ENCODE measurements at regions of chr11 and their contacts with region 1.

Region 1: GRCh38 chr11:83115551-83115950 is 41.4 kb upstream of the PCF11 start:
- DNase-seq: no peak
- ATAC-seq: no peak
- H3K4me3 ChIP-seq: no peak overlapping the region
- H3K4me3 Mint-ChIP-seq: peak overlapping the region; percentile 75
- H3K27ac ChIP-seq: no peak overlapping the region
- H3K27ac Mint-ChIP-seq: peak overlapping the region; percentile 72
- H3K4me1 ChIP-seq: peaks cover 34% of the 10 kb centered on the region
- H3K4me1 Mint-ChIP-seq: peaks cover 52% of the 10 kb centered on the region
- H3K27me3 ChIP-seq: no peaks in the 10 kb centered on the region
- H3K27me3 Mint-ChIP-seq: no peaks in the 10 kb centered on the region
- CTCF ChIP-seq: no peak

Region 2: GRCh38 chr11:82959987-82960778 is 155.4 kb before region 1 on chr11:
- CTCF ChIA-PET with region 1: no interaction called
- POLR2A ChIA-PET with region 1: no interaction called
- intact Hi-C with region 1: no loop called
- DNase-seq: peak in 10 of 14 experiments; percentile 12 to 92 (median 46)
- ATAC-seq: peak; percentile 85
- H3K4me3 ChIP-seq: peak overlapping the region; percentile 37
- H3K4me3 Mint-ChIP-seq: peak overlapping the region; percentile 69
- H3K27ac ChIP-seq: peak overlapping the region; percentile 76 to 81
- H3K27ac Mint-ChIP-seq: peak overlapping the region; percentile 97
- H3K4me1 ChIP-seq: peaks cover 45% of the 10 kb centered on the region
- H3K4me1 Mint-ChIP-seq: peaks cover 88% of the 10 kb centered on the region
- H3K27me3 ChIP-seq: no peaks in the 10 kb centered on the region
- H3K27me3 Mint-ChIP-seq: no peaks in the 10 kb centered on the region
- CTCF ChIP-seq: no peak

Region 3: GRCh38 chr11:83078269-83078668 is 37.3 kb before region 1 on chr11:
- CTCF ChIA-PET with region 1: no interaction called
- POLR2A ChIA-PET with region 1: no interaction called
- intact Hi-C with region 1: loop called (anchors 5 kb)
- DNase-seq: no peak
- ATAC-seq: no peak
- H3K4me3 ChIP-seq: no peak overlapping the region
- H3K4me3 Mint-ChIP-seq: no peak overlapping the region
- H3K27ac ChIP-seq: no peak overlapping the region
- H3K27ac Mint-ChIP-seq: peak overlapping the region; percentile 78
- H3K4me1 ChIP-seq: peaks cover 13% of the 10 kb centered on the region
- H3K4me1 Mint-ChIP-seq: peaks cover 31% of the 10 kb centered on the region
- H3K27me3 ChIP-seq: no peaks in the 10 kb centered on the region
- H3K27me3 Mint-ChIP-seq: no peaks in the 10 kb centered on the region
- CTCF ChIP-seq: no peak

Region 4: DNA sequence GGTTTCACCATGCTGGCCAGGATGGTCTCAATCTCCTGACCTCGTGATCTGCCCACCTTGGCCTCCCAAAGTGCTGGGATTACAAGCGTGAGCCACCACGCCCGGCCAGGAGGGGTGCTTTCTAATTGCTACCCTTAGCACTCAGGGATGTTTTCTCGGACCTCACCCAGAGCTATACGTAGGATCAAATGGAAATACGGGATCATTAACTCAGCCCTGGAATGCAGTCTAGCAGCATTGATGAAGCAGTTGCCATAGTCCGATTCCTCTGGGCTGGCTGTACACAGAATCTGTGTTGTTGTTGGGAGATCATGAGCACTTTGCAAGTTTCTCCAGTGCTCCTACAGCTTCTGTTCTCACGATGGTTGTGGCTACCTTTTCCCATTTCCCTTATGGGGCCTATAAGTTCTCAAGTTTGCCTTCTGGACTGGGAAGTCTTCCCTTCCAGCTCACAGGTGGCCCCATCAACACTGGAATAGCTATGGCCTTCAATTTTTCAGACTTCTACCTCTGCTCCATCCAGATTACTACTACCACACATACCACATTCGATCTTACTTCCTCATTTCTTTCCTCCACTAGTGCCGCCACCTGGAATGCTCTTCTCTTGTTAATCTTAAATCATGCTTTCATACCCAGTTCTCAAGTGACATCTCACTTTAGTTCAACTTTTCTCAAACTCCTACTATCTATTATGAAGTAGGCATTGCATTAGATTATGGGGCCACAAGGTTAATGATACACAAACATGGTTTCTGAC is 25.3 kb after region 1 on chr11:
- CTCF ChIA-PET with region 1: no interaction called
- POLR2A ChIA-PET with region 1: no interaction called
- intact Hi-C with region 1: no loop called
- DNase-seq: no peak
- ATAC-seq: no peak
- H3K4me3 ChIP-seq: no peak overlapping the region
- H3K4me3 Mint-ChIP-seq: no peak overlapping the region
- H3K27ac ChIP-seq: no peak overlapping the region
- H3K27ac Mint-ChIP-seq: no peak overlapping the region
- H3K4me1 ChIP-seq: no peaks in the 10 kb centered on the region
- H3K4me1 Mint-ChIP-seq: no peaks in the 10 kb centered on the region
- H3K27me3 ChIP-seq: no peaks in the 10 kb centered on the region
- H3K27me3 Mint-ChIP-seq: no peaks in the 10 kb centered on the region
- CTCF ChIP-seq: no peak

Region 5: GRCh38 chr11:83681031-83681781 is 565.7 kb after region 1 on chr11:
- CTCF ChIA-PET with region 1: no interaction called
- POLR2A ChIA-PET with region 1: no interaction called
- intact Hi-C with region 1: no loop called
- DNase-seq: no peak
- ATAC-seq: no peak
- H3K4me3 ChIP-seq: no peak overlapping the region
- H3K4me3 Mint-ChIP-seq: no peak overlapping the region
- H3K27ac ChIP-seq: no peak overlapping the region
- H3K27ac Mint-ChIP-seq: no peak overlapping the region
- H3K4me1 ChIP-seq: no peaks in the 10 kb centered on the region
- H3K4me1 Mint-ChIP-seq: no peaks in the 10 kb centered on the region
- H3K27me3 ChIP-seq: peaks cover 0 to 2% of the 10 kb centered on the region in 2 experiments
- H3K27me3 Mint-ChIP-seq: peaks cover 9% of the 10 kb centered on the region
- CTCF ChIP-seq: no peak

Region 6: DNA sequence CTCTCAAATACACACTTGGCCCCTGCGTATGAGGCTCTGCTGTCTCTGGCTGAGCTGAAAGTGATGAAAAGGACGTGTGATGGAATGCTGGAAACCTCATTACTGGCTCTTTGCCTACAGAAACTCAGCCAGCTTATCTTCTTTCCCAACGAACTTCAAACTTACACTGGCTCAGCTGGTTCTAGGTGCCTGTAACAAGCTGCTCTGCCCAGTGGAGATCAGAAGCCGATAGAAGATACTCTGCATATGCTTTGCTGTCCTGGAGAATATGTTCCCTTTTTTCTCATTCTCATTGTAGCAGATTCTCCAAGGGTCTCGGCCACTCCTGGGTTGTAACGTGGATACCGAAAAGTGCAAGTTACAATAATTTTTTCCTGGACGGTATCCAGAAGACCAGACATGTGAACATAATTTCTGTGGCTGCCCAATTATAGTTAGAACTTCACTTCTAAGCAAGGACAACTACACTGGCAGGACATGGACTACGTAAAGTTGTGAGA is 576.0 kb after region 1 on chr11:
- CTCF ChIA-PET with region 1: no interaction called
- POLR2A ChIA-PET with region 1: no interaction called
- intact Hi-C with region 1: no loop called
- DNase-seq: no peak
- ATAC-seq: no peak
- H3K4me3 ChIP-seq: no peak overlapping the region
- H3K4me3 Mint-ChIP-seq: no peak overlapping the region
- H3K27ac ChIP-seq: no peak overlapping the region
- H3K27ac Mint-ChIP-seq: no peak overlapping the region
- H3K4me1 ChIP-seq: no peaks in the 10 kb centered on the region
- H3K4me1 Mint-ChIP-seq: no peaks in the 10 kb centered on the region
- H3K27me3 ChIP-seq: no peaks in the 10 kb centered on the region
- H3K27me3 Mint-ChIP-seq: no peaks in the 10 kb centered on the region
- CTCF ChIP-seq: no peak